SK-N-SH (cell line): ENCODE measurements at regions of chr1 and their contacts with region 1.

Region 1: GRCh38 chr1:242467556-242468145 is 56.8 kb downstream of the PLD5 start:
- DNase-seq: peak; percentile 79
- H3K4me3 ChIP-seq: no peak overlapping the region
- H3K27ac ChIP-seq: peak overlapping the region in 1 of 2 experiments; percentile 39; a peak in 1 of 4 replicates
- H3K4me1 ChIP-seq: peaks cover 0 to 3% of the 10 kb centered on the region in 2 experiments; a peak in 1 of 4 replicates
- H3K27me3 ChIP-seq: no peaks in the 10 kb centered on the region
- CTCF ChIP-seq: peak; percentile 57
- EP300 ChIP-seq: no peak
- RAD21 ChIP-seq: peak; percentile 88

Region 2: GRCh38 chr1:242477944-242478343 is 10.3 kb after region 1 on chr1:
- CTCF ChIA-PET with region 1: interaction called, 11 read pairs
- POLR2A ChIA-PET with region 1: no interaction called
- DNase-seq: peak; percentile 73
- H3K4me3 ChIP-seq: no peak overlapping the region
- H3K27ac ChIP-seq: peak overlapping the region in 1 of 2 experiments; percentile 93; a peak in 2 of 4 replicates
- H3K4me1 ChIP-seq: peaks cover 0 to 10% of the 10 kb centered on the region in 2 experiments; a peak in 2 of 4 replicates
- H3K27me3 ChIP-seq: no peaks in the 10 kb centered on the region
- CTCF ChIP-seq: no peak
- EP300 ChIP-seq: peak in 1 of 2 experiments; percentile 51; a peak in 1 of 4 replicates
- RAD21 ChIP-seq: no peak

Region 3: DNA sequence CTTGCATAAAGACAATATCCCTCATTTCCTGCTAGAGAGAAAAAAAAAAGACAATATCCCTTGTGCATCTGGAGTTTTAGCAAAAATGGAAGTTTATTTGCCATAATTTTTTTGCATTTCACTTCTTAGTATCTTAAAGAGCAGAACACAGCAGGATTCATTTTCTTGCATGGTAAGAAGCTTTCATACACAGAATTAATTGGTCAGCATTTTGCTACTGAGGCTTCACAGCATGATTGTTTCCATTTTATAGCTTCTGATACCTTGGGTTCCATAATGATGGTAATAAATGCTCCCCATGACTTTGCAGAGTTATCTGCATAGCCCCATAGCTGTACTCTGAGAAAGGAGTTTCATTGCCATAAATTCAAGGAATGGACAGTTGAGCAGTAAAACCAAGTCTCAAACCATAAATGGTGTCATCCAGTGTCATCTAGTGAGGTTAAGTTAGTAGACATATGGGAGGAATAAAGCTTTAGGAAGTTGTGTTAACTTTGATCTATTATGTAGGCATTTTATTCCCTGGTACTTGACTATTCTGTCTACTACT is 145.7 kb after region 1 on chr1:
- CTCF ChIA-PET with region 1: no interaction called
- POLR2A ChIA-PET with region 1: no interaction called
- DNase-seq: no peak
- H3K4me3 ChIP-seq: no peak overlapping the region
- H3K27ac ChIP-seq: no peak overlapping the region
- H3K4me1 ChIP-seq: no peaks in the 10 kb centered on the region
- H3K27me3 ChIP-seq: no peaks in the 10 kb centered on the region
- CTCF ChIP-seq: no peak
- EP300 ChIP-seq: no peak
- RAD21 ChIP-seq: no peak

Region 4: DNA sequence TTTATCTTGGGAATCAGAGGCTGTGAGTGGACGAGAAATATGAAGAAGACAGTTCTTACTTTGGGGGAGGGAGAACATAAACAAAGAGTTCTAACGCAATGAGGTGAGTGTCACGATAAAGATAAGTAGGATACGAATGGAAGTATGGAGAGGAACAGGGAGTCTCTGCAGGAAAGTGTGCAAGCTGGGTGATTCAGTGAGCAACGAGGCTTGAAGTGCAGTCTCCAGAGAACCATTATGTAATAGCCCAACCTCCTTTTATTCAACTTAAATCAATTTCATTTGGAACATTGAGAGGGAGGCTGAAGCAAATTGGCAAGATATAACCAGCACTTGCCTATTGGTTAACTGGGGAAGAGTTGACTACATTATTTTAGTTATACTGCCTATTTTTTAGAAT is 156.1 kb after region 1 on chr1:
- CTCF ChIA-PET with region 1: no interaction called
- POLR2A ChIA-PET with region 1: no interaction called
- DNase-seq: no peak
- H3K4me3 ChIP-seq: no peak overlapping the region
- H3K27ac ChIP-seq: no peak overlapping the region
- H3K4me1 ChIP-seq: no peaks in the 10 kb centered on the region
- H3K27me3 ChIP-seq: no peaks in the 10 kb centered on the region
- CTCF ChIP-seq: no peak
- EP300 ChIP-seq: no peak
- RAD21 ChIP-seq: no peak